Naive thymus-derived CD4-positive, alpha-beta T cell (primary cell): ENCODE measurements at regions of chr17 and their contacts with region 1.

Region 1: GRCh38 chr17:75012346-75013091 is at the start of gene MRPL58:
- DNase-seq: peak; percentile 66 to 81 (median 75)
- ATAC-seq: peak; percentile 97
- H3K4me3 ChIP-seq: peak within 1 kb of the TSS; percentile 69
- H3K4me3 Mint-ChIP-seq: peak within 1 kb of the TSS; percentile 76 to 98 (median 94)
- H3K27ac ChIP-seq: peak within 1 kb of the TSS; percentile 83
- H3K27ac Mint-ChIP-seq: peak within 1 kb of the TSS; percentile 5 to 97 (median 92)
- H3K4me1 ChIP-seq: peaks cover 9 to 14% of the 10 kb centered on the region in 2 donors
- H3K4me1 Mint-ChIP-seq: peaks cover 25 to 38% (median 35%) of the 10 kb centered on the region in 7 donors
- H3K27me3 ChIP-seq: no peaks in the 10 kb centered on the region
- H3K27me3 Mint-ChIP-seq: peaks cover 0 to 4% (median 0%) of the 10 kb centered on the region in 5 donors
- total RNA-seq, gene MRPL58: 11.7 to 46.1 (median 23.0) TPM

Region 2: GRCh38 chr17:74430706-74431567 is 581.6 kb before region 1 on chr17:
- CTCF ChIA-PET with region 1: no interaction called
- POLR2A ChIA-PET with region 1: no interaction called
- intact Hi-C with region 1: no loop called
- DNase-seq: peak in 1 of 9 donors; percentile 37
- ATAC-seq: peak; percentile 41
- H3K4me3 ChIP-seq: no peak overlapping the region
- H3K4me3 Mint-ChIP-seq: peak overlapping the region in 8 of 10 donors; percentile 7 to 77 (median 61)
- H3K27ac ChIP-seq: no peak overlapping the region
- H3K27ac Mint-ChIP-seq: peak overlapping the region in 1 of 9 donors; percentile 29
- H3K4me1 ChIP-seq: peaks cover 0 to 6% of the 10 kb centered on the region in 2 donors
- H3K4me1 Mint-ChIP-seq: peaks cover 0 to 18% (median 5%) of the 10 kb centered on the region in 7 donors
- H3K27me3 ChIP-seq: peaks cover 5 to 13% of the 10 kb centered on the region in 2 donors
- H3K27me3 Mint-ChIP-seq: peaks cover 27 to 79% (median 48%) of the 10 kb centered on the region in 5 donors

Region 3: GRCh38 chr17:74904687-74905409 is 107.7 kb before region 1 on chr17:
- CTCF ChIA-PET with region 1: no interaction called
- POLR2A ChIA-PET with region 1: no interaction called
- intact Hi-C with region 1: no loop called
- DNase-seq: no peak
- ATAC-seq: no peak
- H3K4me3 ChIP-seq: no peak overlapping the region
- H3K4me3 Mint-ChIP-seq: no peak overlapping the region
- H3K27ac ChIP-seq: no peak overlapping the region
- H3K27ac Mint-ChIP-seq: no peak overlapping the region
- H3K4me1 ChIP-seq: no peaks in the 10 kb centered on the region
- H3K4me1 Mint-ChIP-seq: peaks cover 0 to 8% (median 3%) of the 10 kb centered on the region in 7 donors
- H3K27me3 ChIP-seq: no peaks in the 10 kb centered on the region
- H3K27me3 Mint-ChIP-seq: peaks cover 0 to 17% (median 5%) of the 10 kb centered on the region in 5 donors

Region 4: DNA sequence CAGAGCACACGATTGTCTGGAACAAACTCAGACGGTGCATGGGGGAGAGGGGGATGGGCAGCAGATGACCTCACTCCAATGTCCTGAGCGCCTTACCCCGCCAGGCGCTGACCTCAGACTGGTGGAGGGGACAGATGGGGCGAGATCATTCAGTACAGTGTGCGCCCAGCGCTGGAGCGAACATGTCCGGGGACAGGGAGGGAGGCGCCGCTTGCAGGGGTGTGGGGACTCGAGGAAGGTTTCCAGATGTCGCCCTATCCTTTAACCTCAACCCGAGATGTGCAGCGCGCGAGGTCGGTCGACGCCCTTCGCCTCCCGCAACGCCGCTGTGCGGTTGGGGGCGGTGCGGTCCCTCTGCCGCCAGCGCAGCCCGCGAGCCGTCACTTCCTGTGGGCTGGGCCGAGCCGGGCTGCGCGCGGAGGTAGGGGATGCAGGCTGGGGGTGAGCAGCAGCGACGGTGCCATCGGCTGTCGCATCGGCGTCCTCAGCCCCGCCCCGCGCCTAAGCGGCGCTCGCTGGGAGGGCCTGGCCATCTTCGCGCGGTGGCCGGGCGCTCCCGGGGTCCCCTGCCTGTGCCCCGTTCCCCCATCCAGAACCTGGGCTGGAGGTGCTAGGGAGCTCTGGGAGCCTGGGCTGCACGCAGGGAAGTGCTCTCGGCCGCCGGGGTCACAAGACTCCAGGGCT is 30.4 kb before region 1 on chr17:
- CTCF ChIA-PET with region 1: interaction called, 4 read pairs
- POLR2A ChIA-PET with region 1: interaction called, 22 read pairs
- intact Hi-C with region 1: loop called (anchors 1 to 2 kb)
- DNase-seq: peak; percentile 67 to 85 (median 83)
- ATAC-seq: peak; percentile 97
- H3K4me3 ChIP-seq: peak overlapping the region; percentile 77
- H3K4me3 Mint-ChIP-seq: peak overlapping the region; percentile 85 to 95 (median 92)
- H3K27ac ChIP-seq: peak overlapping the region; percentile 65
- H3K27ac Mint-ChIP-seq: peak overlapping the region; percentile 64 to 96 (median 87)
- H3K4me1 ChIP-seq: peaks cover 18 to 20% of the 10 kb centered on the region in 2 donors
- H3K4me1 Mint-ChIP-seq: peaks cover 3 to 27% (median 23%) of the 10 kb centered on the region in 7 donors
- H3K27me3 ChIP-seq: no peaks in the 10 kb centered on the region
- H3K27me3 Mint-ChIP-seq: peaks cover 0 to 57% (median 0%) of the 10 kb centered on the region in 5 donors

Region 5: GRCh38 chr17:75024686-75025397 is 12.3 kb after region 1 on chr17:
- CTCF ChIA-PET with region 1: interaction called, 5 read pairs
- POLR2A ChIA-PET with region 1: interaction called, 24 read pairs
- intact Hi-C with region 1: no loop called
- DNase-seq: peak in 7 of 9 donors; percentile 36 to 60 (median 51)
- ATAC-seq: peak; percentile 58
- H3K4me3 ChIP-seq: no peak overlapping the region
- H3K4me3 Mint-ChIP-seq: peak overlapping the region; percentile 51 to 83 (median 65)
- H3K27ac ChIP-seq: no peak overlapping the region
- H3K27ac Mint-ChIP-seq: peak overlapping the region in 8 of 9 donors; percentile 43 to 82 (median 62)
- H3K4me1 ChIP-seq: peaks cover 4% of the 10 kb centered on the region in 2 donors
- H3K4me1 Mint-ChIP-seq: peaks cover 5 to 35% (median 18%) of the 10 kb centered on the region in 7 donors
- H3K27me3 ChIP-seq: no peaks in the 10 kb centered on the region
- H3K27me3 Mint-ChIP-seq: peaks cover 0 to 7% (median 0%) of the 10 kb centered on the region in 5 donors

Region 6: GRCh38 chr17:75059369-75060345 is 47.1 kb after region 1 on chr17:
- CTCF ChIA-PET with region 1: interaction called, 14 read pairs
- POLR2A ChIA-PET with region 1: interaction called, 6 read pairs
- intact Hi-C with region 1: no loop called
- DNase-seq: peak in 6 of 9 donors; percentile 32 to 56 (median 48)
- ATAC-seq: peak; percentile 79
- H3K4me3 ChIP-seq: no peak overlapping the region
- H3K4me3 Mint-ChIP-seq: no peak overlapping the region
- H3K27ac ChIP-seq: peak overlapping the region; percentile 23
- H3K27ac Mint-ChIP-seq: peak overlapping the region in 8 of 9 donors; percentile 51 to 91 (median 81)
- H3K4me1 ChIP-seq: no peaks in the 10 kb centered on the region
- H3K4me1 Mint-ChIP-seq: peaks cover 0 to 26% (median 20%) of the 10 kb centered on the region in 7 donors
- H3K27me3 ChIP-seq: no peaks in the 10 kb centered on the region
- H3K27me3 Mint-ChIP-seq: no peaks in the 10 kb centered on the region